Common myeloid progenitor, CD34-positive (primary cell): ENCODE measurements at regions of chr2 and their contacts with region 1.

Region 1: GRCh38 chr2:74010087-74010661 is 25.5 kb downstream of the TET3 start:
- DNase-seq: no peak
- H3K4me3 ChIP-seq: no peak overlapping the region
- H3K27ac ChIP-seq: peak overlapping the region in 1 of 2 experiments; percentile 1
- H3K4me1 ChIP-seq: no peaks in the 10 kb centered on the region
- H3K27me3 ChIP-seq: no peaks in the 10 kb centered on the region

Region 2: GRCh38 chr2:73995810-73996209 is 14.4 kb before region 1 on chr2:
- CTCF ChIA-PET with region 1: interaction called, 12 read pairs
- POLR2A ChIA-PET with region 1: no interaction called
- DNase-seq: no peak
- H3K4me3 ChIP-seq: no peak overlapping the region
- H3K27ac ChIP-seq: no peak overlapping the region
- H3K4me1 ChIP-seq: peaks cover 0 to 20% (median 2%) of the 10 kb centered on the region in 4 experiments
- H3K27me3 ChIP-seq: no peaks in the 10 kb centered on the region

Region 3: DNA sequence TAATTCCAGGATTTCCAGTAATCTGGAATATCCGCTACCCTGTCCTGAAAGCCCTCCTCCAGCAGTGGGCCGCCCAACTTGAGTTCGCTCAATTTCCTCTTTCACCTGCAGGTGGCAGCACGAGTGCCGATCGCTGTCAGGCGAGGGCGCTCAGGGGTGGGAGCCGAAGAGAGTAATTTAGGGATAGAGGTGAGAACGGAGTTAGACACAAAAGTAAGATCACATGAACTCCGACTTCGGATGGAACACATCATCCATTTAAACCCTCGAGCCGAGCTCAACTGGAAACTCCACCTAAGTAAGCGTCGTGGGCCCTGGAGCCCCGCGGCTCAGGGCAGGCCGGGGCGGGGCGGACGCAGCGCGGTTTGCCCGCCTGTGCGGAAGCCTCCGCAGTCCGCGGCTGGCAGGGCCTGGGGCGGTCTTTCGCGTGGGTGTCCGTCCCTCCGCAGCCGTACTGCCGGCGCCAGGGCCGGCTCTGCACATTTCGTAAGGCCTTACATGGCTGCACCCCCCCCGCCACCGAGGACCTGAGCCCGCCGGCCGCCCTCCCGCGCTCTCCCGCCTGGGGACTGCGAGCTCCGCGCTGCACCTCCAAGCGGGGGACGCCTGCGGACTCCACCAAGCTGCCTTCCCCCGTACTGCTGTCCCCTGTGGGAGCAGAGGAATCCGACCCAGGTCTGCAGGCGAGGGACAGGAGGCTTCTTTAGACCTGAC is 705.1 kb after region 1 on chr2:
- CTCF ChIA-PET with region 1: no interaction called
- POLR2A ChIA-PET with region 1: no interaction called
- DNase-seq: peak; percentile 75 to 87 (median 84)
- H3K4me3 ChIP-seq: peak overlapping the region; percentile 27 to 78 (median 71)
- H3K27ac ChIP-seq: no peak overlapping the region
- H3K4me1 ChIP-seq: peaks cover 0 to 9% (median 5%) of the 10 kb centered on the region in 4 experiments
- H3K27me3 ChIP-seq: peaks cover 0 to 6% (median 0%) of the 10 kb centered on the region in 5 experiments